Dendritic cell treated with granulocyte-macrophage colony-stimulating factor and Interleukin-4, amounts not matched to agents 40 ng/mL and 50 ng/mL, for 4 days (primary cell): ENCODE measurements at regions of chr16 and their contacts with region 1.

Region 1: DNA sequence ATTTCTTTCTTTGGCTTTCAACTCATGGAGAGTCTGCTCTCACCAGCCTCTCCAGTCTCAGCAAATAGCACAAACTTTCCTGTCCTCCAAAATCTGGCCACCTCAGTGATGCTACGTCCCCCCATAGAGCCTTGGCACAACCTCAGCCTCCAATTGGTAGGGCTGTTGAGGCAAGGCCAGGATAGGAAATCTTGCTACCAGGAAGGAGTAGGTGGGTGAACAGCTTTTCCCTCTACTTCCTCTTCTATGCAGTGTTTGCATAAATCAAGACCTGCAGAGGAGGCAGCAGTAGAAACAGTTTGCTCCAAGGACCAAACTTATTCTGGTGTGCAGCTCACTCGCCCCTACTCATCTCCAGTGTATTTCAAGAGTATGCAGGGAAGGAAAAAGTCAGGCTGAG is 701 bp upstream of the DPEP2 start:
- H3K4me3 Mint-ChIP-seq: peak overlapping the region; percentile 76
- H3K27ac Mint-ChIP-seq: peak overlapping the region; percentile 98
- H3K4me1 Mint-ChIP-seq: peaks cover 63% of the 10 kb centered on the region
- H3K27me3 Mint-ChIP-seq: no peaks in the 10 kb centered on the region

Region 2: DNA sequence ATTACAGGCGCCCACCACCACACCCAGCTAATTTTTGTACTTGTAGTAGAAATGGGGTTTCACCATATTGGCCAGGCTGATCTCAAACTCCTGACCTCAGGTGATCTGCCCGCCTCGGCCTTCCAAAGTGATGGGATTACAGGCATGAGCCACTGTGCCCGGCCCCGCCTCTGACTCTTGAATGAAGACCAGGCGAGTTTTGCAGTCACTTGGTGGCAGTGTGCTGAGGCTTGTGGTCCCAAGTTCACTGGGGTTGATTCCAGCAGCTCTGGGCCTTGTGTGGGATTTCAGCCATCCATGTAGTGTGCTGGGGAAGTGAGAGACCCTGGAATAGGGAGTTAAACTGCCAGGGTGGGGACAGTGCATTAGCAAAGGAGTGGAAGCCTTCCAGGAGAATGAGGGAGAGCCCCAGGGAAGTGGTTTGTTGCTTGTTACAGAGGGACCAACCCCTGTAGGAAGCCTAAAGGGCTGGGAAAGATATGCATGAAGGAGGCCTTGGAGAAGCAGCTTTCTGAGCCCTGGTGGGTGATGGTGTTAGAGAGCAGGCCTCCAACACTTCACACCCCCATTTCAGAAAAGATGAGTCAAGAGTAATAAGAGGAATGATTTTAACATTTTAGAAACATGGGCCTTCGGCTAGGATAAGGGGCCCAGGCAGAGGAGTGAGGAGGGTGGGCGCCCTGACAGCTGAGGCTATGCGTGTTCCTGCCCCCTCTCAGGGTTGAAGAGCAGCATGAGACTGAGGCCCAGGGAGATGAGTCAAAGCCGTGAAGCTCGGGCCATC is 92.4 kb before region 1 on chr16:
- intact Hi-C with region 1: no loop called
- H3K4me3 Mint-ChIP-seq: no peak overlapping the region
- H3K27ac Mint-ChIP-seq: no peak overlapping the region
- H3K4me1 Mint-ChIP-seq: peaks cover 4% of the 10 kb centered on the region
- H3K27me3 Mint-ChIP-seq: no peaks in the 10 kb centered on the region

Region 3: DNA sequence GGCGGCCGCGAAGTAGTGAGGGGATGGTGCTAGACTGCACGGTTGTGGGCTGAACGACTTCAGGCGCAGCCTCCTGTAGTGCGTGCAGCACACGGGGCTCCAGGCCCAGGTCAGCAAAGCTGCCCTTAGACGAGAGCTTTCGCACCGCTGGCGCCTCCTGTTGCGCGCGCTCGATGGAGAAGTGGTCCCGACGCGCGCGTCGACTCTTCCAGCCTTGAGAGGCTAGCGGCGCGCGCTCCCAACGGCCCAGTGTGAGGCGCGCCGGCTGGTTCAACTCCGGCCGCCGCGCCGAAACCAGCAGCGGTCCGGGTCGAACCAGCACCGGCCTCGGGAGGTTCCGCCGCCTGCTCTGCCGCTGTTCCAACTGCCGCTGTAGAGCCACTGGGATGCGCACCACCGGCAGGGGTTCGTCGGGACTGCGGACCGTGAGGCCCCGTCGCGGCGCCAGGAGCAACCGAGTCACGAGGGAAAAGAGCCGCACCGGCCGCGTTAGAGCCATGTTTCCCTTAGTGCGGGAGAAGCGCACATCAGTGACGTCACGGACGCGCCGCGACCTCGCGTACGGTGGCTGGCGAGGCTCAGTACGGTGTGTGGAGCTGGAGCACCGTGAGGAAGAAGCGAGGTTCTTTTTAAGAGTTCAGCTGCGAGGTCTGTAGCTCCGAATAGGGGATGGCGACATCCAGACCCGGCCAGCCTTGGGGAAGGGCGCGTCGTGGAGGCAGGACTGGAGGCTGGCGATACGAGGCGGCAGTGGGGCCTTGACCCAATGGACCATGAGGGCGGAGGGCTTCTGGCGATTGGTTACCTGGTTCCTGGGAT is 22.9 kb after region 1 on chr16 and contains the starts of genes DDX28 and DUS2:
- intact Hi-C with region 1: loop called (anchors 2 kb)
- H3K4me3 Mint-ChIP-seq: peak within 1 kb of the TSS; percentile 90
- H3K27ac Mint-ChIP-seq: peak within 1 kb of the TSS; percentile 92
- H3K4me1 Mint-ChIP-seq: peaks cover 27% of the 10 kb centered on the region
- H3K27me3 Mint-ChIP-seq: no peaks in the 10 kb centered on the region